Brain microvascular endothelial cell (primary cell): ENCODE measurements at regions of chr4 and their contacts with region 1.

Region 1: GRCh38 chr4:122716825-122717448 is 15.6 kb upstream of the BBS12 start:
- DNase-seq: peak; percentile 73
- H3K4me3 ChIP-seq: no peak overlapping the region
- H3K27ac ChIP-seq: no peak overlapping the region
- H3K27me3 ChIP-seq: no peaks in the 10 kb centered on the region
- CTCF ChIP-seq: peak; percentile 96

Region 2: DNA sequence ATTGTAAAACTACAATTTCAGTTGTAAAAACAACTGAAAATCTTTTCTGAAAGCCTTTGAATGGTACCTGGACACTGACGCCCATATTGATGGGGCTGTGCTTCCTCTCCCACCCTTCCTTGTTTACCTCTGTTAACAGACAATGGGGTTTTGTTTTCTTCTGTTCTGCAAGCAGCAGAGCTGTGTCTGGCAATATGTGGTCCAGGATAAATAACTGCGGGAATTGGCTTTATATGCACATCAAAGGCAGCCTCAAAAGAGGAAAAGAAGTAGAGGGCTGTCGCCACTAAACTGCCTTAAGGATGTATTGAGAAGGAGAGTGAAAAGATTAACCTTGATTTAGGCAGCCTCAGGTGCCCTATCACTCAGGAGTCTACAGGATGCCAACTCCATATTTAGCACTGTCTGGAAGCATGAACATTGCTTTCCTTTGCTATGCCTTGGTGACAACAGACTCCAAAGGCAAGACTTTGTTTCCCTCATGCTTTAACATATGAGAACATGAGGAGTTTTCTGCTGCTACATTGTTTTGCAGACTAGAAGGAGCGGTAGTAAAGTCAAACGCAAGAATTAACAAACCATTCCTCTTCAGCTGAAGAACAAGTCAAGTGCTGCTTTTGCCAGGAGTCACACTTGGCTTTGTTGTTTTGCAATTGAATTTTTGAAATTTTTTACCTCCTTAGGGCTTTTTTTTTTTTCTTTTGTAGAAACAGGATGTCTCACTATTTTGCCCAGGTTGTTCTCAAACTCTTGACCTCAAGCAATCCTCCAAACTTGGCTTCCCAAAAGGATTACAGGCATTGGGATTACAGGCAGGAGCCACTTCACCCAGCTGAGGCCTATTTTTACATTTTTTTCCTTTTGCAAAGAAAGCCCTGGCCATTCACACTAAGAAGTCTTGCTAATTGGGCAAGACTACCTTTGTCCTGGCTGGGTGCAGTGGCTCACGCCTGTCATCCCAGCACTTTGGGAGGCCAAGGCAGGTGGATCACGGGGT is 99.0 kb before region 1 on chr4:
- in situ Hi-C with region 1: loop called (anchors 10 kb)
- DNase-seq: no peak
- H3K4me3 ChIP-seq: no peak overlapping the region
- H3K27ac ChIP-seq: no peak overlapping the region
- H3K27me3 ChIP-seq: no peaks in the 10 kb centered on the region
- CTCF ChIP-seq: no peak